ENCODE measurements at regions of chr5 and their contacts with region 1.

Region 1: DNA sequence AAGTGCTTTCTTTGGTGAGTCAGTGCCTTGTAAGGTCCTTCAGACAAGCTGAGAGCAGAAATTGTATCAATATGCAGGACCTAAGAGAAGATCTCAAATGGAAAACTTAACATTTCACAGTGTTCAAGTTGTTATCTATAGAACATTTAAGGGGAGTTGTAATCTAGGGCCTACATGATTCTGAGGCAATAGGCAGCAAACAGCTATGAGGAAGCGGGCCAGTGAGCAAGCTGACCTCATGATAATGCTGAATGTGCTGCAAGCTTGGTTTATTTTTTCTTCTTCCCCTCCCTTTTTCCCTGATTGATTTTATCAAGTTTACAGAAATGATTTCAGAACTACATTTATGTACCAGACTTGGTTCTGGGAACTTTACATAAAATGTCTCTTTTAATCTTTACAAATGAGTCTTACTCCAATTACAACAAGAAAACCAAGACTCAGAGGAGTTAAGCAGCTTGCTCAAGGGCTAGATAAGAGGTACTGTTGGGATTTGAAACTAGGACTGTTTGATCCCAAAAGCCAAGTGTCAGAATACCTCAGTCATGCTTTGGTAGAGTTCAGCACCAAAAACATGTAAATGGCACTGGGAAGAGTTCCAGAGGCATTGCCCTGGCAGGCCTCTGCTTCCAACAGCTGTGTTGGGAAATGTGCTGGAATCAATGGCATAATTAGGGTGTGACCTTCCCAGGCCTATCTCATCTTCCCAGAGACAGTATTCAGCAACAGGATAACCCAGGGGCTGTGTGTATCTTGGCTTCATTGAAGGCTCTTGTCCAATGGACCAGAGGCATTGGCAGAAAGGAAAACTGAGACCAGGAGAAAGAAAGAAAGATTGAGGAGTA is 130.1 kb downstream of the LRRC70 start:
- DNase-seq: no peak

Region 2: GRCh38 chr5:62720031-62720441 is 11.3 kb after region 1 on chr5:
- CTCF ChIA-PET with region 1: no interaction called
- POLR2A ChIA-PET with region 1: no interaction called
- DNase-seq: peak; percentile 46

Region 3: GRCh38 chr5:62779010-62779422 is 70.3 kb after region 1 on chr5:
- CTCF ChIA-PET with region 1: interaction called, 10 read pairs
- POLR2A ChIA-PET with region 1: no interaction called
- DNase-seq: peak; percentile 63

Region 4: DNA sequence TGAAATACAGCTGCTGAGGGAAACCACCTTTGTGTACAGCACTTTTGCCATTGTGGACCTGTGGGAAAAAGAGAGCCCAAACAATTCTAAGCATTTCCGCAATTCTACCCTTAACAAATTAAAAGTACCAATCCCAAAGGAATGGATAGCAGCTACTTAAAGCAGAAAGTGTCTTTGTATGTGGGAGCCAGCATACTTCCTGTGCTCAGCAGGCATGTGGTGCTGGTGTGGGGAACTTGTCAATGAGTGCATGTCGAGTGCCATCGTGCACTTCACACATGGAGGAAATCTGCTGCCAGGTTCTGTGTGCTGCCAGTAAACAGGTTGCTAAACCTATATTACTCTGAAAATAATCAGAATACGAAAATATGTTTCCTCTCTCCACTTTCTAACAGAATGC is 269.0 kb after region 1 on chr5:
- CTCF ChIA-PET with region 1: no interaction called
- POLR2A ChIA-PET with region 1: no interaction called
- DNase-seq: no peak

Measured in HEK293T (cell line).